MCF 10A (cell line): ENCODE measurements at regions of chr2 and their contacts with region 1.

Region 1: GRCh38 chr2:9287400-9288043 is 80.9 kb downstream of the ASAP2 start:
- DNase-seq: peak; percentile 97
- H3K4me3 Mint-ChIP-seq: peak overlapping the region; percentile 50
- H3K27ac Mint-ChIP-seq: peak overlapping the region; percentile 84
- H3K4me1 Mint-ChIP-seq: peaks cover 58% of the 10 kb centered on the region
- H3K27me3 Mint-ChIP-seq: no peaks in the 10 kb centered on the region
- CTCF ChIP-seq: no peak

Region 2: GRCh38 chr2:9251154-9252001 is 36.1 kb before region 1 on chr2:
- CTCF ChIA-PET with region 1: interaction called, 4 read pairs
- POLR2A ChIA-PET with region 1: interaction called, 65 read pairs
- intact Hi-C with region 1: loop called (anchors 2 kb)
- DNase-seq: peak; percentile 95
- H3K4me3 Mint-ChIP-seq: peak overlapping the region; percentile 65
- H3K27ac Mint-ChIP-seq: peak overlapping the region; percentile 90
- H3K4me1 Mint-ChIP-seq: peaks cover 70% of the 10 kb centered on the region
- H3K27me3 Mint-ChIP-seq: no peaks in the 10 kb centered on the region
- CTCF ChIP-seq: no peak

Region 3: DNA sequence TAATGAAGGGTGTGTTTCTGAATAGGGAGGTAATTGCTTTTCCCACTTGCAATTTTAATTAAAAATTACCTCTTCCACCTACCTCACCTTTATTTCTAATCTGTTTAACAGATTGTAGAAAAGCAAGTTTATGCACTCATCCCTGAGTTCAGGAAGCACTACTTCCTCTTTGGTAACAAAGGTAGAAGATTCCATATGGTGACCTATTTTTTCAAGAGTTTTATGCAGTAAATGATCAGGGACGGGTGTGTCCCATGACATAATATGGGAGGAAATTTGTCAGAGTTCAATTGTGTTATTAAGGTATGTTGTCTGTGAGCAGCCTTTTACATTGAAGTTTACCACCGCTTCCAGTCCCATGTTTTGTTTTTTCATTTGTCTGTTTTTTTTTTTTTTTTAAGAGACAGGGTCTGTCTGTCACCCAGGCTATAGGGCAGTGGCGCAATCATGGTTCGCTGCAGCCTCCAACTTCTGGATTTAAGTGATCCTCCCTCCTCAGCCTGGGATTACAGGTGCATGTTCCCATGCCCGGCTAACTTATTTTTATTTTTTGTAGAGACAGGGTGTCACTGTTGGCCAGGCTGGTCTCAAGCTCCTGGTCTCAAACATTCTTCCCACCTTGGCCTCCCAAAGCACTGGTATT is 12.7 kb before region 1 on chr2:
- CTCF ChIA-PET with region 1: interaction called, 4 read pairs
- POLR2A ChIA-PET with region 1: interaction called, 35 read pairs
- intact Hi-C with region 1: no loop called
- DNase-seq: no peak
- H3K4me3 Mint-ChIP-seq: no peak overlapping the region
- H3K27ac Mint-ChIP-seq: peak overlapping the region; percentile 11
- H3K4me1 Mint-ChIP-seq: peaks cover 25% of the 10 kb centered on the region
- H3K27me3 Mint-ChIP-seq: no peaks in the 10 kb centered on the region
- CTCF ChIP-seq: no peak

Region 4: DNA sequence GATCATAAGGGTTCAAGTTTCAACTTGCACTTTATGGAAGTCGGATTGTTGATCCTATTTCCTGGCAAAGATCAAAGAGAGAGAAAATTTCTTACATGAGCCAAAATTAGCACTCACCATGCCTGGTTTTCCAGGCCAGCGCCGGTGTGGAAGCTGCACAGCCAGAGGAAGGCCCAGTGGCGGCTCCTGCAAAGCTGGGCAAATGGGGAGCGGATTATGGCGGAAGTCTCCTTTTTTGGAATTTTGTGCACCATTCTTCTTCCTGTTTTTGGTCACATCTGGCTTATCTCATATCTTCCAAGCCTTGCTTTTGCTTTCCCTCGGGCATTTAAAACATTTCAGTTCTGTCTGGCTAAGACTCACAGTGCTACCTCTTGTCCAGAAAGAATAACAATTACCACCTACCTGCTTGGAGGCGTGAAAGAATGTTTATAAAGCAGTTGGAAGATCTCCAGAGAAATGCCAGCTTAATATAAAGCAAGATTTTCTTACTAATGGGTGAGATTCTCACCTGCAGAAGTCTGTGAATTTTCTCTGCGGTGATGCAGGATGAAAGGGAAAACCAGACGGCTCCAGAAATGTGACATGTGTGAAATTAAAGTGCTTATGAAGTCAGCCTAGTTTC is 13.4 kb after region 1 on chr2:
- CTCF ChIA-PET with region 1: interaction called, 8 read pairs
- POLR2A ChIA-PET with region 1: interaction called, 22 read pairs
- intact Hi-C with region 1: no loop called
- DNase-seq: no peak
- H3K4me3 Mint-ChIP-seq: no peak overlapping the region
- H3K27ac Mint-ChIP-seq: no peak overlapping the region
- H3K4me1 Mint-ChIP-seq: peaks cover 6% of the 10 kb centered on the region
- H3K27me3 Mint-ChIP-seq: no peaks in the 10 kb centered on the region
- CTCF ChIP-seq: no peak

Region 5: DNA sequence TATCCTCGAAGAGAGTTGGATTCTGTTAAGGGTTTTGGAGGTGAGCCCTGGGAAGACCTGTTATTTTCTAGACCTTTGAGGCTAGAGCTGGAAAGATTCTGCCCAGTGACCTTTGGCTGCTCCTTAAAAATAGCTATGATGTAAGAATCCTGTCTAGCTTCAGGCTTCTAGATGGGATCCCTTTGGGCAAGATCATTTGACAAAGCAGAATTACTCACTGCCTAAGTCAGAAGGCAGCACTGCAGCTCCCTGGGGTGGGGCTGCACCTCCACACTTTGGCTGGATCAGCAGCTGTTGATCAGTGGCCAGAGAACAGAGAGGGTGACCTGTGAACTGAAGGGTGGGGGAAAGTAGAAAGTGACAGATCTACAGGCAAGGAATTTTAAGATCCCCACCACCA is 22.9 kb after region 1 on chr2:
- CTCF ChIA-PET with region 1: interaction called, 6 read pairs
- POLR2A ChIA-PET with region 1: interaction called, 98 read pairs
- intact Hi-C with region 1: loop called (anchors 1 kb)
- DNase-seq: peak; percentile 88
- H3K4me3 Mint-ChIP-seq: peak overlapping the region; percentile 39
- H3K27ac Mint-ChIP-seq: peak overlapping the region; percentile 85
- H3K4me1 Mint-ChIP-seq: peaks cover 54% of the 10 kb centered on the region
- H3K27me3 Mint-ChIP-seq: no peaks in the 10 kb centered on the region
- CTCF ChIP-seq: no peak

Region 6: DNA sequence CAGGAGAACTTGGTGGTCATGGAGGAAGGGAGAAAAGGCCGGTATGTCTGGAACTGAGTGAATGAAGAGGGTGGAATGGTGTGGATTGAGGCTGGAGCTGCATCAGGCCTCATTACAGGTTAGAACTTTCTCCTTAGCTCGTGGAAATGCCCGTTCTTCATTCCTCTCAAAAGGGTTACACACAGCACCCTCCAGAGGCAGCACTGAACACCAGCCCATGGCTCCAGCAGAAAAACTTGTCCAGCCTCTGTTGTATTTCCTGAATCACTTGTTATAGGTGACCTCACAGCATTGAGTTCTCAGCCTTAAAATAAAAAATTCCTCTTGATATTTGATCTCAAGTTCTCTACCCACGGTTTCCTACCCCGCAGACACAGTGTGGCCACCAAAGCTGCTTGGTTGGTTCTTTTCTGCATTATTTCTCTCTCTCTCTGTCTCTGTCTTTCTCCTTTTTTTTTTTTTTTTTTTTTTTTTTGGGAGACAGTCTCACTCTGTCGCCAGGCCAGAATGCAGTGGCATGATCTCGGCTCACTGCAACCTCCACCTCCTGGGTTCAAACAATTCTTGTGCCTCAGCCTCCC is 46.2 kb after region 1 on chr2:
- CTCF ChIA-PET with region 1: interaction called, 3 read pairs
- POLR2A ChIA-PET with region 1: interaction called, 5 read pairs
- intact Hi-C with region 1: loop called (anchors 2 kb)
- DNase-seq: peak; percentile 78
- H3K4me3 Mint-ChIP-seq: no peak overlapping the region
- H3K27ac Mint-ChIP-seq: peak overlapping the region; percentile 87
- H3K4me1 Mint-ChIP-seq: peaks cover 31% of the 10 kb centered on the region
- H3K27me3 Mint-ChIP-seq: no peaks in the 10 kb centered on the region
- CTCF ChIP-seq: peak; percentile 76